ENCODE measurements at regions of chr13 and their contacts with region 1.

Region 1: GRCh38 chr13:29782798-29783197 is 67.6 kb downstream of the UBL3 start:
- DNase-seq: no peak
- H3K4me3 Mint-ChIP-seq: no peak overlapping the region
- H3K27ac Mint-ChIP-seq: no peak overlapping the region
- H3K4me1 Mint-ChIP-seq: no peaks in the 10 kb centered on the region
- H3K27me3 Mint-ChIP-seq: no peaks in the 10 kb centered on the region

Region 2: GRCh38 chr13:29817604-29818378 is 35.0 kb after region 1 on chr13:
- intact Hi-C with region 1: loop called (anchors 5 kb)
- DNase-seq: no peak
- H3K4me3 Mint-ChIP-seq: peak overlapping the region; percentile 10
- H3K27ac Mint-ChIP-seq: peak overlapping the region; percentile 55
- H3K4me1 Mint-ChIP-seq: peaks cover 32% of the 10 kb centered on the region
- H3K27me3 Mint-ChIP-seq: no peaks in the 10 kb centered on the region

Region 3: DNA sequence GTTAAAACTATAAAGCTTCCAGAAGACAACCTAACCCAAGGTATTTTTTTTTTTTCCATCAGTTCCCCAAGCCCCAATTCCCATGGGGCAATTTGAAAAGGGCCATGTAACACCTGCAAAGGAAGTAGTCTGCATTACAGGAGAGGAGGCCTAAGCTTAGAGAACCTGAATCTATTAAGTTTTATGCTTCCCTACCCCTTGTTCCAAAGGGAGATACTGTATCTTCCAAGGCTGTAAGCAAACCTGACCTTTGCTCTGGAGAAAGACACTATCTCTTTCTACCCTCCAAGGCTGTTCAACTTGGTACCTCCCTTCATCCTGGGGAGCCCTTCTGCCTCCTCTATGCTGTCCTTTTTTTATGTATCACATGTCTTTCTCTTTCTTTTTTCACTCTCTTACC is 509.5 kb after region 1 on chr13:
- intact Hi-C with region 1: no loop called
- DNase-seq: no peak
- H3K4me3 Mint-ChIP-seq: no peak overlapping the region
- H3K27ac Mint-ChIP-seq: no peak overlapping the region
- H3K4me1 Mint-ChIP-seq: peaks cover 2% of the 10 kb centered on the region
- H3K27me3 Mint-ChIP-seq: no peaks in the 10 kb centered on the region

Region 4: DNA sequence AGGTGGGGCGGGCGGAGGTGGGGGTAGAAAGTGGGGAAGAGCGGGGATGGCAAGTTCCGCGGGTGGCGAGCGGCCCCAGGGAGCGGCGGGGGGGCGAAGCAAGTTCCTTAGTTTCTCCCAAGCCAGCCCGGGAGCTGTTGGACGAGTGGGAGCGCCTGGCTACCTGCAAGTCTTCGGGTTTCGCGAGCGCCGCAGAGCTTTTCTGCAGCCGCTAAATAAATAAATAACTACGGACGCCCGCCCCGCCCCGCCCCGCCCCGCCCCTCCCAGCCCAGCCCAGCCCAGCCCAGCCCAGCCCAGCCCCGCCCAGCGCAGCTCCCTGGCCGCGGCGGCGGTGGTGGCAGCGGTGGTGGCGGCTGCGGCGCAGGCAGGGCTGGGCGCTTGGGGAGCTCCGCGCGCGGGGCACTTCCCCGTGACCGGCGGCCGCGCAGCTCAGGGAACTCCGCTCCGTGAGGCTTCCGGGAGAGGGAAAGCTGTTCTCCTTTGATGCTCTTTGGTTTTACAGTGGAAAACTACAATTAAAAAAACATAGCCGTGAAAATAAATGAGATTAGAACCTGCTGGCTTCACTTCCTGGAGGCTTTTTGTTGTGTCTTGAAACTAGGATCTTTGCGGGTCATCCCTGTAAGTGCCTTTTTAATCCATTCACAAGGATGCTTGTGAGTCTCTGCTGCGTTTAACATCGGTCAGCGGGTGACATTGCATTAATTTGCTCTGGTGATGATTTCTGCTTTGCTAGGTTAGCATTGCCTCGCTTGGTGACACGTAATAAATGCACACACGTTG is 639.4 kb after region 1 on chr13 and contains the start of gene UBE2L5:
- intact Hi-C with region 1: no loop called
- DNase-seq: peak; percentile 73
- H3K4me3 Mint-ChIP-seq: peak within 1 kb of the TSS; percentile 86
- H3K27ac Mint-ChIP-seq: peak within 1 kb of the TSS; percentile 76
- H3K4me1 Mint-ChIP-seq: peaks cover 14% of the 10 kb centered on the region
- H3K27me3 Mint-ChIP-seq: no peaks in the 10 kb centered on the region
- total RNA-seq, gene UBE2L5: not detected in 2 replicates

Measured in activated T-helper 2 cell treated with anti-CD3 and anti-CD28 coated beads, Interferon-gamma antibody, Interleukin-2, Interleukin-4, amounts not matched to agents 10 μg/mL and 5 μg/mL and 100 μg/mL, durations not matched to agents 14 hours and 24 hours and 36 hours (primary cell).